ENCODE measurements at regions of chr14 and their contacts with region 1.

Region 1: GRCh38 chr14:90132821-90133570 is 71.2 kb downstream of the KCNK13 start:
- DNase-seq: no peak
- H3K4me3 ChIP-seq: no peak overlapping the region
- H3K27me3 ChIP-seq: no peaks in the 10 kb centered on the region
- CTCF ChIP-seq: no peak

Region 2: GRCh38 chr14:90061846-90062794 is 70.9 kb before region 1 on chr14 and contains the start of gene KCNK13:
- CTCF ChIA-PET with region 1: no interaction called
- POLR2A ChIA-PET with region 1: interaction called, 11 read pairs
- DNase-seq: no peak
- H3K4me3 ChIP-seq: peak within 1 kb of the TSS; percentile 16; the same call in 1 of the 2 replicates
- H3K27me3 ChIP-seq: peaks cover 33% of the 10 kb centered on the region
- CTCF ChIP-seq: no peak
- polyA plus RNA-seq, gene KCNK13: not detected in 2 replicates